Brain microvascular endothelial cell (primary cell): ENCODE measurements at regions of chr11 and their contacts with region 1.

Region 1: DNA sequence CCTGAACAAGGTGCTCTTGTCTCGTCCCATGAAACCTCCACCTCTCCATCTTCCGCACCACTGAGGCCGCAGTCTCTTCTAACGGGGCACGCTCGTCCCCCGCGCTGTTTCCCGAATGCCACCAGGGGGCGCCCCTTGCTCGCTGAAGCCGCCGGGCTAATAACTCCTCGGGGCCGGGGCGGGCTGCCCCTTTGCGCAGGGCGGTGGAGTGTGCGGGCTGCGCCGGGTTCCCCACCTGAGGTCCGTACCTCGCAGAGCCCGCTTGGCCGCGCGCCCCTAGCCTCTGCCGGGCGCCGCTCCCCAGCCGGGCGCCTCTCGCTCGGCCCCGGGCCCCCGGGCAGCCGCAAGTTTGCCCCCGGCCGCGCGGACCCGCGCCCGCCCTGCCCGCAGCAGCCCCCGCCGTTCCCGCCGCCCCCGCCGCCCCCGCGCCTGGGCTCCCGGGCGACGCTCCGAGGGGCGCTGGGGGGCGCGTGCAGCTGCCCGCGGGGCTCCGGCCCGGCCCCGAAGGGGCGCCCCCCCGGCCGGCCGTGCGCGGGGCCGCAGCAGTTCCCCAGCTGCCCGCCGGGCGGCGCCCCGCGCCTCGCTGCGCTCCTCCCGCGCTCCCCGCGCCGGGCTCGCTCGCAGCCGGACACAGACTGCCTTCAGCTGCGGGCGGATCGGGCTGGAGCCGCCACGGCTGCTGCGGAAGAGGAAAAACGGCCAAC is at the start of gene GRIK4:
- DNase-seq: peak; percentile 56
- H3K4me3 ChIP-seq: peak within 1 kb of the TSS; percentile 37
- H3K27ac ChIP-seq: no peak within 1 kb of the TSS
- H3K27me3 ChIP-seq: peaks cover 7% of the 10 kb centered on the region
- CTCF ChIP-seq: peak; percentile 92

Region 2: GRCh38 chr11:120696597-120697218 is 185.4 kb after region 1 on chr11:
- in situ Hi-C with region 1: loop called (anchors 25 kb)
- DNase-seq: no peak
- H3K4me3 ChIP-seq: no peak overlapping the region
- H3K27ac ChIP-seq: no peak overlapping the region
- H3K27me3 ChIP-seq: no peaks in the 10 kb centered on the region
- CTCF ChIP-seq: no peak